ENCODE measurements at regions of chr12 and their contacts with region 1.

Region 1: DNA sequence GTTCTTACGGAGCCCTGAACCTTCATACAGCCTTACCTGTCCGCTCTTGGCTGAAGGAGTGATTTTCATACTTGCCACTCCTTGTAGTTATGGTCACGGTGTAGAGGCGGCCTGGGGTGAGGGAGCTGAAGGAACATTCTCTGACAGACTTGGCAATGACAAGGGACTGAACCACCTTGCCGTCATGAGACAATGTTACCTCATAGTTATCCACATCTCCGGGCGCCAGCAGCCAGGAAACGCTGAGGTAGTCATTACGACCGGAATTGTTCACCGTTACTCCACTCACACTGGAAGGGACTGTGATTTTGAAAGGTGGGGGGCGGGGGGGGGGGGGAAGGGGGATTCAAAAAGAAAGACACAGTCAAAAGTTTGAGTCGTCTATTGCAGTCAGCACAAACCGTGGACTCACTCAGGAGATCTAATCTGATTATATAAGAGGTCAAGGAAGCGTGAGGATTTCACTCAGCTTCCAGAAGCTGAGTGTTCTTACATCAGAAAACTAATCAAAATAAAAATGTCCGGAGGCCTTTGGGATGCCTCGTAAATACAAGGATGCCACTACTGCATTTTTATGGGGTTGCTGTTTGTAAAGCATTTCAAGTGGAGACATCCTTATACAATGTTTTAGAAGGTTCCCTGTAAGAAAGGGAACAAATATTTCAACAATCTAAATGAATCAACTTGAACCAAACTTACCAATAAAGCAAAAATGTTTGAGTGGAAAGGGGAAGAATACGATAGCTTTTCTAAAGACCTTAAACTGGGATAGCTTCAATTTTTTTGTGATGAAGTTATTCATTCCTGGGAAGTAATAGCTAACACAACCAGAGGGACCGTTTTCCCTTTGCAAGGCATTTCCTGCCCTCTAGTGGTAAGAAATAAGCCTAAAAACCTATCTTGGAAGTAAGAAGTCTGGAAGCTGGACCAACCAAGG is 60.6 kb downstream of the PTPRB start:
- DNase-seq: peak; percentile 53
- H3K4me3 ChIP-seq: peak overlapping the region in 1 of 2 experiments; percentile 21; a peak in 1 of 4 replicates
- H3K27ac ChIP-seq: peak overlapping the region in 1 of 2 experiments; percentile 42; a peak in 1 of 4 replicates
- H3K4me1 ChIP-seq: no peaks in the 10 kb centered on the region
- H3K27me3 ChIP-seq: no peaks in the 10 kb centered on the region
- CTCF ChIP-seq: peak; percentile 89
- EP300 ChIP-seq: no peak
- RAD21 ChIP-seq: peak; percentile 95

Region 2: GRCh38 chr12:69885658-69886057 is 691.0 kb before region 1 on chr12:
- CTCF ChIA-PET with region 1: interaction called, 94 read pairs
- POLR2A ChIA-PET with region 1: no interaction called
- DNase-seq: no peak
- H3K4me3 ChIP-seq: no peak overlapping the region
- H3K27ac ChIP-seq: no peak overlapping the region
- H3K4me1 ChIP-seq: peaks cover 0 to 2% of the 10 kb centered on the region in 2 experiments; a peak in 1 of 4 replicates
- H3K27me3 ChIP-seq: no peaks in the 10 kb centered on the region
- CTCF ChIP-seq: no peak
- EP300 ChIP-seq: no peak
- RAD21 ChIP-seq: no peak